ENCODE measurements at regions of chr6 and their contacts with region 1.

Region 1: DNA sequence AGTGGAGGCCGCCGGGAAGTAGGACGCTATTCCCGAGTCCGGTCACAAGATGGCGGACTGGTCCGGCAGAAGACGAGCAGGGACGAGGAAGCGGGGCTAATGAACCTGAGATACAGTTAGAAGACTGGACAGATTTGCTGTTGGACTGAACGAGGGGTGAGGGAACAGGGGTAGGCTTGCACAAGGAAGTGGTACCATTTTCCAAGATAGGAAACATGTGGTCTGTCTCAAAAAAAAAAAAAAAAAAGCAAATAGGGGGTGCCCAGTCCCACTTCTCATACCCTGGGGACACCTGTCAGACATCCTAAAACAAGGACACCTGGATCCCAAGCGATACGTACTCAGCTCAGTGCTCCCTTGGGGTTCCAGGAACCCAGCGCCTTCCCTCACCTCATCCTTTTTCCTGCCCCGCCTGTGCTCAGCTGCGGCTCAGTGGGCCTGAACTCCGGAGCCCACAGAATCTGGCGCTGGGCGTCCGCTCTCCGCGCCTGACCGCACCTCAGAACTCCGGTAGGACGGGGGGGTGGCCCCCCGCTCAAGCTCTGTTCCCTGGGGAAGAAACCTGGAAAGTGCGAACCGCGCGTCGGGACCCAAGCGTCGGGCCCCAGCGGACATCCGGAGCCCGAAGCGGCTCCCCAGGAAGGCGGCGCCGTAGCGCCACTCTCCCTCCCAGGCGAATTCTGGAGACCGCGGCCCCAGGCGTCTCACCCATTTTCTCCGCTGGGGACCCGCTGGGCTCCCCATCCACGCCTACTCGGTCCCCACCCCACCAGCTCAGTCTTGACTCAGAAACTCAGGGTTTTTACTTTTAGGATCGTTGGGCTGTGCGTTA is at the start of gene LY6G5C:
- DNase-seq: peak; percentile 84 to 88 (median 86)
- ATAC-seq: peak; percentile 89
- H3K4me3 ChIP-seq: peak within 1 kb of the TSS in 1 of 2 donors; percentile 18
- H3K27ac ChIP-seq: peak within 1 kb of the TSS in 3 of 4 donors; percentile 59 to 82 (median 70)
- H3K4me1 ChIP-seq: peaks cover 27% of the 10 kb centered on the region
- H3K27me3 ChIP-seq: no peaks in the 10 kb centered on the region
- CTCF ChIP-seq: peak; percentile 34 to 87 (median 81)
- POLR2A ChIP-seq: peak in 2 of 3 donors; percentile 48 to 49
- total RNA-seq, gene LY6G5C: 4.4 TPM in 1 of 2 donors, not detected in the other

Region 2: GRCh38 chr6:30530014-30530413 is 1151.0 kb before region 1 on chr6:
- intact Hi-C with region 1: no loop called
- DNase-seq: no peak
- ATAC-seq: no peak
- H3K4me3 ChIP-seq: no peak overlapping the region
- H3K27ac ChIP-seq: no peak overlapping the region
- H3K4me1 ChIP-seq: peaks cover 10% of the 10 kb centered on the region
- H3K27me3 ChIP-seq: no peaks in the 10 kb centered on the region
- CTCF ChIP-seq: no peak
- POLR2A ChIP-seq: no peak

Region 3: GRCh38 chr6:31952140-31952805 is 271.2 kb after region 1 on chr6:
- intact Hi-C with region 1: loop called (anchors 5 kb)
- DNase-seq: peak; percentile 61 to 74 (median 64)
- ATAC-seq: peak; percentile 76
- H3K4me3 ChIP-seq: no peak overlapping the region
- H3K27ac ChIP-seq: no peak overlapping the region
- H3K4me1 ChIP-seq: peaks cover under 1% of the 10 kb centered on the region
- H3K27me3 ChIP-seq: no peaks in the 10 kb centered on the region
- CTCF ChIP-seq: peak; percentile 54 to 72 (median 64)
- POLR2A ChIP-seq: no peak